Activated CD4-positive, alpha-beta memory T cell treated with anti-CD3 and anti-CD28 coated beads for 36 hours (primary cell): ENCODE measurements at regions of chr1 and their contacts with region 1.

Region 1: GRCh38 chr1:46223472-46223943 is 20.4 kb downstream of the LURAP1 start:
- DNase-seq: peak; percentile 76
- H3K4me3 Mint-ChIP-seq: no peak overlapping the region
- H3K27ac Mint-ChIP-seq: no peak overlapping the region
- H3K4me1 Mint-ChIP-seq: peaks cover 1% of the 10 kb centered on the region
- H3K27me3 Mint-ChIP-seq: no peaks in the 10 kb centered on the region

Region 2: GRCh38 chr1:46132529-46133180 is 90.9 kb before region 1 on chr1 and contains the start of gene PIK3R3:
- CTCF ChIA-PET with region 1: interaction called, 7 read pairs
- POLR2A ChIA-PET with region 1: no interaction called
- intact Hi-C with region 1: loop called (anchors 1 kb)
- DNase-seq: peak; percentile 94
- H3K4me3 Mint-ChIP-seq: peak within 1 kb of the TSS; percentile 92
- H3K27ac Mint-ChIP-seq: peak within 1 kb of the TSS; percentile 84
- H3K4me1 Mint-ChIP-seq: peaks cover 20% of the 10 kb centered on the region
- H3K27me3 Mint-ChIP-seq: peaks cover 31% of the 10 kb centered on the region
- total RNA-seq, gene PIK3R3: 0.65 to 0.83 TPM

Region 3: GRCh38 chr1:46179138-46180081 is 44.1 kb before region 1 on chr1:
- CTCF ChIA-PET with region 1: interaction called, 40 read pairs
- POLR2A ChIA-PET with region 1: no interaction called
- intact Hi-C with region 1: loop called (anchors 1 kb)
- DNase-seq: peak; percentile 75
- H3K4me3 Mint-ChIP-seq: no peak overlapping the region
- H3K27ac Mint-ChIP-seq: no peak overlapping the region
- H3K4me1 Mint-ChIP-seq: peaks cover 6% of the 10 kb centered on the region
- H3K27me3 Mint-ChIP-seq: no peaks in the 10 kb centered on the region

Region 4: GRCh38 chr1:46203738-46204405 is 19.6 kb before region 1 on chr1:
- CTCF ChIA-PET with region 1: interaction called, 20 read pairs
- POLR2A ChIA-PET with region 1: interaction called, 3 read pairs
- intact Hi-C with region 1: no loop called
- DNase-seq: no peak
- H3K4me3 Mint-ChIP-seq: no peak overlapping the region
- H3K27ac Mint-ChIP-seq: no peak overlapping the region
- H3K4me1 Mint-ChIP-seq: peaks cover 12% of the 10 kb centered on the region
- H3K27me3 Mint-ChIP-seq: peaks cover 2% of the 10 kb centered on the region

Region 5: DNA sequence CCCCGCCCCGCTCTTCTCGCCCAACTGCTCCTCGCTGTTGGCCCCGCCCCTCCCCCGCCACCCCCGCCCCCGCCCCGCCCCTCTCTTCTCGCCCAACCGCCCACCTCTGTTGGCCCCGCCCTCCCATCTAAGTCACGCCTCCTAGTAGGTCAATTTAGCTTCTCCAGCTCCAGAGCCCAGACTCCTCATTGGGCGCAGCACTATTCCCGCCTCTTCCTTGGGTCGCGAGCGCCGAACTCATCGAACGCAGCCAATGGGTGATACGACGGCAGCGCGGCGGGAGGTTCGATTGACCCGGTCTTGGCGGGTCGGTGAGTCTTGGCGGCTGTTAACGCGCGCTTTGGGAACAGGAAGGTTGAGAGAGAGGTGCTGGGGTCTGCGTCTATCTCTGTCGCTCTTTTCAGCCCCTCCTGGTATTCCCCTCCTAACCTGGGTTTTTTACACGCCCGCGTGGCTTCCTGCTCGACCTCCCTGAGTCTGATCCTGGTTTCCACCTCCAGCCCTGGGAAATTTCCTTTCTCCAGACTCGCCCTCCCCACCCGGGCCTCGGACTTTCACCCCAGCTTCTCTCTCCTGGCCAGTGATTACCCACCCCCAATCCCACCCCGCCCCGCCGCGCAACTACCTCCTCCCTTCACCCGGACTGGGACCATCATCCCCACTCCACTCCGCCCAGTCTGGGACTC is 24.1 kb after region 1 on chr1 and contains the start of gene RAD54L:
- CTCF ChIA-PET with region 1: interaction called, 44 read pairs
- POLR2A ChIA-PET with region 1: no interaction called
- intact Hi-C with region 1: no loop called
- DNase-seq: peak; percentile 99
- H3K4me3 Mint-ChIP-seq: peak within 1 kb of the TSS; percentile 99
- H3K27ac Mint-ChIP-seq: peak within 1 kb of the TSS; percentile 91
- H3K4me1 Mint-ChIP-seq: peaks cover 26% of the 10 kb centered on the region
- H3K27me3 Mint-ChIP-seq: no peaks in the 10 kb centered on the region
- total RNA-seq, gene RAD54L: 64.9 to 65.0 TPM